Head of caudate nucleus (tissue), 42 donors: ENCODE measurements at regions of chr12 and their contacts with region 1.

Region 1: GRCh38 chr12:6076776-6077691 is 47.4 kb downstream of the VWF start:
- DNase-seq: no peak

Region 2: GRCh38 chr12:6092784-6093722 is 16.0 kb after region 1 on chr12:
- intact Hi-C with region 1: loop called (anchors 2 kb)
- DNase-seq: peak in 3 of 42 donors; percentile 5 to 28 (median 13)

Region 3: DNA sequence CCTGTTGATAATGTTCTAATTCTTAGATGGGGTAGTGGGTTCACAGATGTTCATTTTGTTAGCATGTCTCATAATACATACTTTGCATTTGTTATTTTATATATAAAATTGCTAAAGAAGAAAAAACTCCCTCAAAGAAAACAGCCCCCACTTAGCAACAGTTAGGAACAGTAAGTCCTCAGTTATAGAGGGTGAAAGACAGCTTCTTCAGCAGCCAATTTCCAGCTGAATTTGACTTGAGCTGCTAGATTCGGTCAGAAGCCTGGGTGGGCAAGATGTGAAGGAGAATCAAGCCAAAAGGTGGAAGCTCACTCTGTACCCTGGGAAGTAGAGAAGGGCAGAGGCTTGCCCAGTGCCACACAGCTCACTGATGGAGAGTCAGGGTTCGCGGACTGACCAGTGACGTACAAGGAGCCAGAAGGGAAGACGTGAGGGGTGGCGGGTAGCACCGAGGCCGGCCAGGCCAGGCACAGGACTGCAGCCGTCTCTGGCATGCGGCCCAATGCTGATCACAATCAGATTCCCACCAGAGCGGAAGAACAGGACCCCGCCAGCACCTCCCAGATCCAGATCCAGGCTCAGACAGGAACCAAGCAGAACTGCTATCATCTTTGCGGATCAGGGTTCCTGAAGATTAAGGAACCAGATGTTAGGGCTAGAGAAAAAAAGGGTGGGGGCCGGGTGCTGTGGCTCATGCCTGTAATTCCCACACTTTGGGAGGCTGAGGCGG is 77.9 kb after region 1 on chr12:
- intact Hi-C with region 1: no loop called
- DNase-seq: peak in 10 of 42 donors; percentile 10 to 27 (median 18)